Activated CD4-positive, alpha-beta memory T cell treated with anti-CD3 and anti-CD28 coated beads, Interleukin-2, amount 10 ng/mL, durations not matched to agents 7 days and 5 days (primary cell): ENCODE measurements at regions of chr10 and their contacts with region 1.

Region 1: GRCh38 chr10:69202332-69202731 is 17.8 kb upstream of the HKDC1 start:
- DNase-seq: no peak
- H3K4me3 Mint-ChIP-seq: peak overlapping the region; percentile 46
- H3K27ac Mint-ChIP-seq: peak overlapping the region; percentile 75
- H3K4me1 Mint-ChIP-seq: peaks cover 64% of the 10 kb centered on the region
- H3K27me3 Mint-ChIP-seq: no peaks in the 10 kb centered on the region

Region 2: GRCh38 chr10:69179743-69180524 is 22.4 kb before region 1 on chr10 and contains the start of gene SUPV3L1:
- CTCF ChIA-PET with region 1: no interaction called
- POLR2A ChIA-PET with region 1: interaction called, 12 read pairs
- DNase-seq: peak; percentile 87
- H3K4me3 Mint-ChIP-seq: peak within 1 kb of the TSS; percentile 92
- H3K27ac Mint-ChIP-seq: peak within 1 kb of the TSS; percentile 98
- H3K4me1 Mint-ChIP-seq: peaks cover 45% of the 10 kb centered on the region
- H3K27me3 Mint-ChIP-seq: no peaks in the 10 kb centered on the region
- total RNA-seq, gene SUPV3L1: 34.6 to 39.1 TPM

Region 3: GRCh38 chr10:69217119-69217754 is 14.9 kb after region 1 on chr10:
- CTCF ChIA-PET with region 1: interaction called, 43 read pairs
- POLR2A ChIA-PET with region 1: interaction called, 98 read pairs
- DNase-seq: no peak
- H3K4me3 Mint-ChIP-seq: no peak overlapping the region
- H3K27ac Mint-ChIP-seq: no peak overlapping the region
- H3K4me1 Mint-ChIP-seq: peaks cover 64% of the 10 kb centered on the region
- H3K27me3 Mint-ChIP-seq: no peaks in the 10 kb centered on the region

Region 4: DNA sequence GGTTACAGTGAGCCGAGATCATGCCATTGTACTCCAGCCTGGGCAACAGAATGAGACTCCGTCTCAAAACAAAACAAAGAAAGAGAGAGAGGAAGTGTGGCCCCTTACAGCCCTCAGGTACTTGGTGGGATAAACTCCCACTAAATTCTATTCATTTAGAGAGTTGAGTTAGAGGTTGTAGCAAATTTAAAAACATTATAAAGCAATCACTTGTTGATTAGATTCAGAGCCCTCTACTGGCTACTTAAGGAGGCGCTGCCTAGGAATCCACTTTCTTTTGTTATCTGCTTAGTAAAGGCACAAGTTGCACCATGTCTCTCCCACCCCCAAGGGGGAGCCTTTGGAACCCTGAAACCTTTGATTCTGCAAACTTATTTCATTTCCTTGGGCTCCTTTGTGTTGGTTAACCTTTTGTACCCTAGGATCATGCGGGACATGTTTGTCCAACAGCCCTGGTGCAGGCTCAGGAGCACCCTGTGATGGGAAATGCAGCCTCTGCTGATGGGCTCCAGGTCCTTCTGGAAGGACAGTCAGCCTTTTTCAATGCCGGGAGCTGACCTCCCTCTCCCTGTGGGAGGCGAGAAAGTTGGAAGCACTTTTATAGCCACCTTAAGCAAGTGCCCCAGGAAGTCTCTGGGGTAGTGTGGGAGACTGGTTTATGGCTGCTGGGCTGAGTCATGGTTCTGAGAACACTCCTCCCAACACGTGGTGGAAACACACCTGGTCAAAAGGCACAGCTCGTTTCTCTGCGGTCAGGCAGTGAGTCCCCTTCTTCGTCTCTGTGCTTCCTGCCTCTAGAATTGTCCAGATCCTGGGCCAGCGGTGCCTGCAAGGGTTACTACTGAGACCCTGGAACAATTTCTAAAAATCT is 20.1 kb after region 1 on chr10:
- CTCF ChIA-PET with region 1: interaction called, 43 read pairs
- POLR2A ChIA-PET with region 1: interaction called, 98 read pairs
- DNase-seq: peak; percentile 90
- H3K4me3 Mint-ChIP-seq: peak overlapping the region; percentile 58
- H3K27ac Mint-ChIP-seq: peak overlapping the region; percentile 88
- H3K4me1 Mint-ChIP-seq: peaks cover 67% of the 10 kb centered on the region
- H3K27me3 Mint-ChIP-seq: no peaks in the 10 kb centered on the region